Calu3 (cell line): ENCODE measurements at regions of chr1 and their contacts with region 1.

Region 1: DNA sequence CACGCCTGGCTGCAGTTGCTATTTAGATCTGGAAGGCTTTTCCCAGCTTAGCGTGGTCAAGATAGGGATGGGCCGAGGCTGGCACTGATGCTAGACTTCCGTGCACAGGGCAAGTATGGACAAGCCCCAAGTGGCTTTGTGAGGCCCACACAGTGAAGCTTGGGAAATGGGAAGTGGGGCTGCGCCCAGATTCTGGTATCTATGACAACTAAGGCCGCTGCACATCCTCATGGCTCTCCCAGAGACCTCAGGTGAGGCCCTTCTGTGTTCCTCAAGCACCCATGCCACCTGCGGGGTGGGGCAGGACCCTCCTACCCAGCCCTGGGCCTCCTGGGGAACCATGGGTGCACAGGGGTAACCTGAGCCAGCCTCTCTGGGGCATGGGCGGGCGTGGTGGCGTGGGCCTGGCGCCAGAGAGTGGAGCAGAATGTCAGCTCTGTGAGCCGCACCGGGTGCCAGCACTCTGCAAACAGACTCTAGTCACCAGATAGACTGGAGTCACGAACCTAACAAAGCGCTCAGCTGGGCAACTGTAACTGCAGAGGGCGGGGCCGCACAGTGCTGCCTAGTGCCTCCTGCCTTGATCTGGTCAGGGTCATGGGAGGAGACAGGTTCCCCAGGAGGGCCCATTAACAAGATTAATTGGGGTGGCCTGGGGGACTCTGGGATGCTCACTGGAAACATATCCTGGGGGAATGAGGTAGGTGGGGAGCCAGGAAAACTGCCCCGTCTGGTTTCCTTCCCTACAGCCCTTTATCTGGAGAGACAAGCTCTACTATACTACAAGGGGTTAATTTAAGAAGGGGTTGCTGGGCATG is 46.5 kb downstream of the ELF3 start:
- DNase-seq: peak; percentile 96
- H3K4me3 Mint-ChIP-seq: peak overlapping the region; percentile 4
- H3K27ac Mint-ChIP-seq: peak overlapping the region; percentile 66
- H3K4me1 Mint-ChIP-seq: peaks cover 55% of the 10 kb centered on the region
- H3K27me3 Mint-ChIP-seq: no peaks in the 10 kb centered on the region
- CTCF ChIP-seq: no peak

Region 2: GRCh38 chr1:202085682-202086404 is 29.0 kb after region 1 on chr1:
- CTCF ChIA-PET with region 1: interaction called, 4 read pairs
- intact Hi-C with region 1: loop called (anchors 2 kb)
- DNase-seq: peak; percentile 73
- H3K4me3 Mint-ChIP-seq: peak overlapping the region; percentile 67
- H3K27ac Mint-ChIP-seq: peak overlapping the region; percentile 99
- H3K4me1 Mint-ChIP-seq: peaks cover 61% of the 10 kb centered on the region
- H3K27me3 Mint-ChIP-seq: no peaks in the 10 kb centered on the region
- CTCF ChIP-seq: no peak